ENCODE measurements at regions of chr1 and their contacts with region 1.

Region 1: GRCh38 chr1:76190749-76191424 is 116.3 kb downstream of the ST6GALNAC3 start:
- DNase-seq: no peak
- H3K4me3 Mint-ChIP-seq: no peak overlapping the region
- H3K27ac Mint-ChIP-seq: no peak overlapping the region
- H3K4me1 Mint-ChIP-seq: no peaks in the 10 kb centered on the region
- H3K27me3 Mint-ChIP-seq: no peaks in the 10 kb centered on the region
- CTCF ChIP-seq: no peak

Region 2: DNA sequence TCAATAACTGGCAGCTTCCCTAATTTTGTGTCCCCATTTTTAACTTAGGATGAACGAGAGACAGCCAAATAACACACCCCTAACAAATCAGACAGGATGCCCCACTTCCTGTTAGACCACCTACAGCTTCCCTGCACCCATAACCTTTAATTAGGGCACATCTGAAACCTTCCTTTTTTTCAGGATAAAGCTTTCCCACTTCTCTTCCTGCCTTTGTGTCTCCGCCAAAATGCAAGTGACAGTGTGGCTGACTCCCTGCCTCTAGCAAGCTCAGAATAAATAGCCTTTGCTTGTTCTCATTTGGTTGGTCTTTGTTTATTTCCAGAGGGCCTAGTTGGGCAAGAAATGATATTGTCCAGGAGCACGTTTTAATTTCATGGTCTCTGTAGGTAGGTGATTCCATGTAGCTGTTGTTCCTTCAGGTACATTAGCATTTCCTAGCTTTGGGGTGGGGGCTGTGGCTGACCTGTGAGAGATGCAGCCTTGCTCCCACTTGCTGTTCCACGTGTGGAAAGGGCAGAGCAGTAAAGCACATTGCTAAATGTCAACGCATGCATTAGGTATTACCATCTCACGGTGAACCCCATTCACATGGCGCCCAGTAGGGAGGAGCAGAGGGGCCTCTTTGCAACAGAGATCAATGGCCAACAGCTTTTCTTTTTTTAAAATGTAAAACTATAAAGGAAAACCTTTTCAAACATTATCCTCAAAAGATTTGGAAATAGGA is 38.6 kb after region 1 on chr1:
- CTCF ChIA-PET with region 1: interaction called, 3 read pairs
- POLR2A ChIA-PET with region 1: no interaction called
- intact Hi-C with region 1: loop called (anchors 5 kb)
- DNase-seq: no peak
- H3K4me3 Mint-ChIP-seq: no peak overlapping the region
- H3K27ac Mint-ChIP-seq: no peak overlapping the region
- H3K4me1 Mint-ChIP-seq: no peaks in the 10 kb centered on the region
- H3K27me3 Mint-ChIP-seq: no peaks in the 10 kb centered on the region
- CTCF ChIP-seq: no peak

Region 3: DNA sequence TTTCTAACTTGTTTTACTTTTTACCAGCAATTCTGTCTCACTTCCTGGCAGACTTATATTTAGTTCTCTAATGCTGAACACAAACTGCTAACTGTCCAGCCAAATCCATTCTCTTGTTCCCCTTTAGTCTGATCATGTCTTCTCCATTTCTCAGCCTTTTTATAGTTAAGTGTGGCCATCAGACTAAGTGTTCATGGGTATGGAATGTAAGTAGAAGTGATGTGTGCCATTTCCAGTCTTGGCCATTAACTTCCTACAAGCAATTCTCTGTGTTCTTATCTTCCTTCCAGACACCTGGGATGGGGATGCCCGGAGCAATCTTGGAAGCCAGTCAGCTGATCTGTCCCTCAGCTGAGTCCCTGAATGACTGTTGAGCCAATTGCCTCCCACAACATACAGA is 49.4 kb after region 1 on chr1:
- CTCF ChIA-PET with region 1: no interaction called
- POLR2A ChIA-PET with region 1: no interaction called
- intact Hi-C with region 1: no loop called
- DNase-seq: no peak
- H3K4me3 Mint-ChIP-seq: no peak overlapping the region
- H3K27ac Mint-ChIP-seq: no peak overlapping the region
- H3K4me1 Mint-ChIP-seq: peaks cover 8% of the 10 kb centered on the region
- H3K27me3 Mint-ChIP-seq: no peaks in the 10 kb centered on the region
- CTCF ChIP-seq: no peak

Region 4: DNA sequence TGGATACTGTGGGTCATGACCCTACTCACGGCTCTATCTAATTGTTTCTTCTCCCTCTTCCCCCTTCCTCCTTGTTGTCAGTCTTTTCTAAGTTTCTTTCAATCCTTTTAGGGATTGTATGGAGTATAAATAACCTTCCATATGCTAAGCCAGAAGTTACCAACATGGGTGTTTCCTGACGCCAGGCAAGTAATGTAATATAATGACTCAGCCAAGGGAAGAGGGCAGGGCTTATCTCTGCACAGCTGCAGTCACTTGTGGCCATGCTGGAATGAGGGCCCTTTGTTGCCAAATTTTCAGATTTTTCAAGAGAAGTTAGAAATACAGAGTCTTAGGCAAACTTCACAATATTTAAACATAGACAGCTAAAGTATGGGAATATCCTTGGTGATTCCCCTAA is 78.3 kb after region 1 on chr1:
- CTCF ChIA-PET with region 1: no interaction called
- POLR2A ChIA-PET with region 1: no interaction called
- intact Hi-C with region 1: no loop called
- DNase-seq: peak; percentile 52
- H3K4me3 Mint-ChIP-seq: no peak overlapping the region
- H3K27ac Mint-ChIP-seq: no peak overlapping the region
- H3K4me1 Mint-ChIP-seq: peaks cover 8% of the 10 kb centered on the region
- H3K27me3 Mint-ChIP-seq: no peaks in the 10 kb centered on the region
- CTCF ChIP-seq: no peak